CD4-positive, alpha-beta T cell (primary cell): ENCODE measurements at regions of chr2 and their contacts with region 1.

Region 1: GRCh38 chr2:39913648-39914461 is 134.8 kb upstream of the THUMPD2 start:
- DNase-seq: peak in 3 of 14 experiments; percentile 39 to 53 (median 47)
- ATAC-seq: no peak
- H3K4me3 ChIP-seq: no peak overlapping the region
- H3K4me3 Mint-ChIP-seq: no peak overlapping the region
- H3K27ac ChIP-seq: no peak overlapping the region
- H3K27ac Mint-ChIP-seq: no peak overlapping the region
- H3K4me1 ChIP-seq: no peaks in the 10 kb centered on the region
- H3K4me1 Mint-ChIP-seq: no peaks in the 10 kb centered on the region
- H3K27me3 ChIP-seq: no peaks in the 10 kb centered on the region
- H3K27me3 Mint-ChIP-seq: no peaks in the 10 kb centered on the region
- CTCF ChIP-seq: peak; percentile 63

Region 2: GRCh38 chr2:40113272-40113968 is 199.6 kb after region 1 on chr2:
- CTCF ChIA-PET with region 1: no interaction called
- POLR2A ChIA-PET with region 1: no interaction called
- intact Hi-C with region 1: no loop called
- DNase-seq: no peak
- ATAC-seq: no peak
- H3K4me3 ChIP-seq: no peak overlapping the region
- H3K4me3 Mint-ChIP-seq: no peak overlapping the region
- H3K27ac ChIP-seq: no peak overlapping the region
- H3K27ac Mint-ChIP-seq: no peak overlapping the region
- H3K4me1 ChIP-seq: no peaks in the 10 kb centered on the region
- H3K4me1 Mint-ChIP-seq: no peaks in the 10 kb centered on the region
- H3K27me3 ChIP-seq: no peaks in the 10 kb centered on the region
- H3K27me3 Mint-ChIP-seq: no peaks in the 10 kb centered on the region
- CTCF ChIP-seq: no peak

Region 3: GRCh38 chr2:40554668-40555285 is 640.9 kb after region 1 on chr2:
- CTCF ChIA-PET with region 1: no interaction called
- POLR2A ChIA-PET with region 1: no interaction called
- intact Hi-C with region 1: loop called in 1 of 2 experiments (anchors 5 kb)
- DNase-seq: peak in 9 of 14 experiments; percentile 0 to 46 (median 5)
- ATAC-seq: no peak
- H3K4me3 ChIP-seq: no peak overlapping the region
- H3K4me3 Mint-ChIP-seq: no peak overlapping the region
- H3K27ac ChIP-seq: no peak overlapping the region
- H3K27ac Mint-ChIP-seq: no peak overlapping the region
- H3K4me1 ChIP-seq: no peaks in the 10 kb centered on the region
- H3K4me1 Mint-ChIP-seq: no peaks in the 10 kb centered on the region
- H3K27me3 ChIP-seq: no peaks in the 10 kb centered on the region
- H3K27me3 Mint-ChIP-seq: no peaks in the 10 kb centered on the region
- CTCF ChIP-seq: peak; percentile 45

Region 4: GRCh38 chr2:41698678-41699422 is 1785.0 kb after region 1 on chr2:
- CTCF ChIA-PET with region 1: no interaction called
- POLR2A ChIA-PET with region 1: no interaction called
- intact Hi-C with region 1: loop called in 1 of 2 experiments (anchors 5 kb)
- DNase-seq: peak in 4 of 14 experiments; percentile 2 to 20 (median 10)
- ATAC-seq: no peak
- H3K4me3 ChIP-seq: no peak overlapping the region
- H3K4me3 Mint-ChIP-seq: no peak overlapping the region
- H3K27ac ChIP-seq: no peak overlapping the region
- H3K27ac Mint-ChIP-seq: no peak overlapping the region
- H3K4me1 ChIP-seq: peaks cover 2% of the 10 kb centered on the region
- H3K4me1 Mint-ChIP-seq: no peaks in the 10 kb centered on the region
- H3K27me3 ChIP-seq: peaks cover 0 to 1% of the 10 kb centered on the region in 2 experiments
- H3K27me3 Mint-ChIP-seq: peaks cover 15% of the 10 kb centered on the region
- CTCF ChIP-seq: peak; percentile 11

Region 5: DNA sequence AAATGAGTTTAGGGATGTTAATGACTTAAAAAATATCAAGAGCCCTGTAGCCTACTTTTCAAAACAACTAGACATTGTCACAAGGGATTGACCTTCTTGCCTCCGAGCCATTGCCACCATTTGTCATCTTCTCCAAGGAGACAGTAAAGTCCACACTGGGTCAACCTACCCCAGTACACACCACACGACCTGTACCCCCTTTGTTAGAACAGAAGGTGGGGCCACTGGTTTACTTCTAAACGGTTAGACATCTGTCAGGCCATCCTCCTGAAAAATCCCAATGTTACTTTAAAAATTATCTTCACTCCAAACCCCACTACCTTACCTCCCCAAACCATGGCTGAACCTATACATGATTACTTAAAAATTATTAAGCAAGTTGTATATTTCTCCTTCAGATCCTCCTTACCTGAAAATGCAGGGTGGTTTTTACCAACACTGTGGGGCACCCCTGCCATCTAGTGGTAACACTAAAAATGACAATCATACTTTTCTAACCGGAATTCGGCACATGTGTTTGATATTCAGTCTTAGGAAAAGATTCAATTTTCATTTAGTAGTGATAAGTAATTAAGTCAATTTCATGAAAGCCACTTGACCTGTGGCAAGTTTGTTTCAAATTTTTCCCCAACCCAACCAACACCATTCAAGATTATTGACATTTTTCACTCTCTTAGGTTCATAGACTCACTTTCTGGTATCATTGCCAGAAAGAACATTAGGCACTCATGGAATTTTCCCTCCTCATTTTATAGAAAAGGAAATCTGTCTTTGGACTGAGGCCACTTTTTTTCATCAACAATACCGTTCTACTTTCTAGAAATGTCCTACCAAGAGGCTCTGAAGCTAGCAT is 1868.7 kb after region 1 on chr2:
- CTCF ChIA-PET with region 1: no interaction called
- POLR2A ChIA-PET with region 1: no interaction called
- intact Hi-C with region 1: loop called (anchors 1 to 2 kb)
- DNase-seq: peak in 5 of 14 experiments; percentile 8 to 59 (median 39)
- ATAC-seq: no peak
- H3K4me3 ChIP-seq: no peak overlapping the region
- H3K4me3 Mint-ChIP-seq: no peak overlapping the region
- H3K27ac ChIP-seq: no peak overlapping the region
- H3K27ac Mint-ChIP-seq: no peak overlapping the region
- H3K4me1 ChIP-seq: no peaks in the 10 kb centered on the region
- H3K4me1 Mint-ChIP-seq: no peaks in the 10 kb centered on the region
- H3K27me3 ChIP-seq: peaks cover 0 to 3% of the 10 kb centered on the region in 2 experiments
- H3K27me3 Mint-ChIP-seq: peaks cover 22% of the 10 kb centered on the region
- CTCF ChIP-seq: peak; percentile 85